Activated CD4-positive, alpha-beta T cell treated with anti-CD3 and anti-CD28 coated beads for 36 hours (primary cell): ENCODE measurements at regions of chr16 and their contacts with region 1.

Region 1: DNA sequence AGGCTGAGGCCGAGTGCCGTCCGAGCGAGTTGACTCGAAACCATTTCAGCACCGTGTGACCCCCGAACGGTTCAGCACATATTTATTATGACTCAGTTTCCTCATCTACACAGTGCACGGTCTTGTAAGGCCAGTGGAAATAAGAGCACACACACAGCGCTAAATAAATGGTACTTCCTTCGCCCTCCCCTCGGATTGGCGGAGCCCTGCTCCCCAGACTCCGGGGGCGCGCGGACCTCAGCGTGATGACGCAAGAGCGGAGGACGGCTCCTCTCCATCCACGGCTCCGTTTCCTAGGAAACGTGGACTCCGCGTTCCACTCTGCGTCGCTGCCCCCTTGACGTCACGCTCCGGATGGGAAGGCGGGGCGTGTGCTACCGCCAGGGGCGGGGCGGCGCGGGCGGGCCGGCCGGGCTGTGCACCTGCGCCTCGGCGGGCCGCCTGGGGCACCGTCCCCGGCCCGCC is at the start of gene PARD6A:
- DNase-seq: peak; percentile 98
- ATAC-seq: peak; percentile 83
- H3K4me3 Mint-ChIP-seq: peak within 1 kb of the TSS; percentile 90
- H3K27ac Mint-ChIP-seq: peak within 1 kb of the TSS; percentile 91
- H3K4me1 Mint-ChIP-seq: peaks cover 21% of the 10 kb centered on the region
- H3K27me3 Mint-ChIP-seq: no peaks in the 10 kb centered on the region
- total RNA-seq, gene PARD6A: 7.8 to 8.7 TPM

Region 2: DNA sequence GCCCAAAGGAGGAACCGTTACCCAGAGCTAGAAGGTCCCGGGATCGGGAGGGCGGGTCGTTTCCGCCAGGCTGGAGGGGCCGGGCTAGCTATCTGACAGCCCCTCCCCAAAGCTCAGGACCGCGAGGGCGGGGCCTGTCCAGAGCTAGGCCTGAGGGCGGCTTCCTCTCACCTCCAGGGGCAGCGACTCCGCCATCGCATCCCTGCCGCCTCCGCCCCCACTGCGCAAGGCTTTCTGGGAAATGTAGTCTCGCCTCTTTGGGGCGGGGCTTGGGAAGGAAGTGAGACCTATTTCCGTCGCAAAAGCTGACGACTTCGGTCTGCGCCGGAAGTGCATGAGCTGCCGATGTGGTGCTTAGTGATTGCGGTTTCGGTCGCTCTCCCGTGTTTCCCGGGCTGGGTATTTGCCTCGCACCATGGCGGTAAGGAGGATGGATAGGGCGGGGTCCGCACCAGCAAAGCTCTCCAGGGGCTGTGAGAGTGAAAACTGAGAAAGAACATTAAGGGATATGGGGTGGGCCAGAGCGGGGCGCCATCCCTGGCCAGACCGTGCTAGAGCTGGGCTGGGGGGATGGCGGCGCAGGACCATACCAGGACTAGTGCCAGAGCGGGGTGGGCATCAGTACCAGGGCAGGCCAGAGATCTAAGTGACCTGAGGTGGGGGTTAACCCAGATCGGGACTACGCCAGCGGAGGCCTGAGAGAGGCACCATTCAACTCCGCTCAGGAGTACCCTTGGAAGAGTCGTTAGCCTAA is 433.6 kb before region 1 on chr16 and contains the start of gene TMEM208:
- CTCF ChIA-PET with region 1: interaction called, 7 read pairs
- POLR2A ChIA-PET with region 1: no interaction called
- intact Hi-C with region 1: loop called in 1 of 2 experiments (anchors 2 kb)
- DNase-seq: peak; percentile 99
- ATAC-seq: peak; percentile 97
- H3K4me3 Mint-ChIP-seq: peak within 1 kb of the TSS; percentile 98
- H3K27ac Mint-ChIP-seq: peak within 1 kb of the TSS; percentile 98
- H3K4me1 Mint-ChIP-seq: peaks cover 42% of the 10 kb centered on the region
- H3K27me3 Mint-ChIP-seq: no peaks in the 10 kb centered on the region
- total RNA-seq, gene TMEM208: 13.6 to 31.2 TPM

Region 3: GRCh38 chr16:67537270-67537635 is 123.3 kb before region 1 on chr16:
- CTCF ChIA-PET with region 1: interaction called, 4 read pairs
- POLR2A ChIA-PET with region 1: interaction called, 3 read pairs
- intact Hi-C with region 1: loop called in 1 of 2 experiments (anchors 1 kb)
- DNase-seq: peak; percentile 74
- ATAC-seq: peak; percentile 62
- H3K4me3 Mint-ChIP-seq: peak overlapping the region; percentile 73
- H3K27ac Mint-ChIP-seq: peak overlapping the region; percentile 58
- H3K4me1 Mint-ChIP-seq: peaks cover 15% of the 10 kb centered on the region
- H3K27me3 Mint-ChIP-seq: peaks cover 6% of the 10 kb centered on the region

Region 4: GRCh38 chr16:67719048-67719777 is 58.6 kb after region 1 on chr16 and contains the start of gene GFOD2:
- CTCF ChIA-PET with region 1: interaction called, 4 read pairs
- POLR2A ChIA-PET with region 1: no interaction called
- intact Hi-C with region 1: loop called in 1 of 2 experiments (anchors 1 kb)
- DNase-seq: peak; percentile 99
- ATAC-seq: peak; percentile 95
- H3K4me3 Mint-ChIP-seq: peak within 1 kb of the TSS; percentile 82
- H3K27ac Mint-ChIP-seq: peak within 1 kb of the TSS; percentile 98
- H3K4me1 Mint-ChIP-seq: peaks cover 29% of the 10 kb centered on the region
- H3K27me3 Mint-ChIP-seq: no peaks in the 10 kb centered on the region
- total RNA-seq, gene GFOD2: 8.7 to 11.5 TPM

Region 5: DNA sequence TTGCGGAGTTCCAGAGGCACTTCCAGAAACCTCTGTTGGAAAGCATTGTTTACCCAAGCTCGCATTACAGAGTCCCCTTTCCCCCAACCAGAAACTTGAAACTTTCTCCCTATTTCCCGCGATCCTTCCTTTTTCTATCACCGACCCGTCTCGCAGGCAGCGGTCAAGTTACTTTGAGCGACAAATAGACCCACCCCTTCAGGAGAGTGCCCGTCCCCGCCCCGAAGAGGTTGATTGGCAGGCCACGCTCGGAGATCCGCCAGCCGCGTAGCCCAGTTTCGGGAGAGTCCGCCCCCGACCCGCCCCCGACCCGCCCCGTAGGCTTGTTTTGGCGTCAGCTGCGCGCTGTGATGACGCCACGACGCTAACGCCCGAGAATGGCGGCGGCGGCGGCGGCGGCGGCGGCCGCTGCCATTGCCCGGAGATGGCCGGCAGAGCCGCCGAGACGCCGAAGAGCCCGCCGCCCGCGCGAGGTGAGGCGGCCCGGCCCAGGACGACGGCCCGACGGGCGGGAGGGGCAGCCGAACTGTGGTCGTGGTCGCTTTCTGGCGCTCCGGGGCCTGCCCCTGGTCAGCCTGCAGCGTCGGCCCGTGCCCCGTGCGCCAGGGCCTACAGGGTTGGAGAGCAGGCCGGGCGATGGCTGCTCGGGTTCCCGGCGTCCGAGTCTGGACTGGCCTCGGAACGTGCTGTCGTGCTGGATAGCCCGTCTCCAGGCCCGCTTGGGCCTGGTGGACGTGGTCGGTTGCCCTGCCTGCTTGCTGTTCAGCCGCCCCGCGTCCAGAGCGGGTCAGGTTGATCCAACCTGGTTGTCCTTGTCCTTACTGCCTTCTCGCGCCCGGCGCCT is 232.5 kb after region 1 on chr16 and contains the start of gene PSKH1:
- CTCF ChIA-PET with region 1: no interaction called
- POLR2A ChIA-PET with region 1: no interaction called
- intact Hi-C with region 1: loop called in 1 of 2 experiments (anchors 1 kb)
- DNase-seq: peak; percentile 97
- ATAC-seq: peak; percentile 99
- H3K4me3 Mint-ChIP-seq: peak within 1 kb of the TSS; percentile 92
- H3K27ac Mint-ChIP-seq: peak within 1 kb of the TSS; percentile 92
- H3K4me1 Mint-ChIP-seq: peaks cover 30% of the 10 kb centered on the region
- H3K27me3 Mint-ChIP-seq: no peaks in the 10 kb centered on the region
- total RNA-seq, gene PSKH1: 11.7 to 11.9 TPM